T-cell (primary cell): ENCODE measurements at regions of chr7 and their contacts with region 1.

Region 1: DNA sequence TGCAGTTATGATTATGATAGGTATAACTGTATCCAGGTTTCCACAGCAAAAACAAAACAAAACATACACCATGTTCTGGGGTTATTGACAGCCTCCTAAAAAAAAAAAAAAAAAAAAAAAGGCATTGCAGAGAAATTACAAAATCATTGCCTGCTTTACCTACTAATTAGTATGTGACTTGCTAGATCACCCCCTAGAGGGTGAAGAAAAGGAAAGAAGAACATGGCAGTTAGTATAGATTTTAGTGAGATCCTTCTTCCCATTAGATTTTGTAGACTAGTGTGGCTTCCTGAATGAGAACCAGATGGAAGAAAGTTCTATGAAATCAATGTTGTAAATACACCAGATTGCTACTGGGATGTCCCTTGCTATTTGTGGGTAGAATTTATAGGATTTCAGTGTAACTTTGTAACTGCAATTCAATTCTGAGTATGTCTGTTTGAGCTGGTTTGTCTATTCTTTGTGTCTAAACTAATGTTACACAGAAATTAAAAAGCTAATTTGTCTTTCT is 24.0 kb upstream of the AGBL3 start:
- DNase-seq: no peak
- ATAC-seq: no peak
- H3K4me3 ChIP-seq: no peak overlapping the region
- H3K4me3 Mint-ChIP-seq: no peak overlapping the region
- H3K27ac ChIP-seq: no peak overlapping the region
- H3K27ac Mint-ChIP-seq: no peak overlapping the region
- H3K4me1 ChIP-seq: peaks cover 0 to under 1% of the 10 kb centered on the region in 2 experiments
- H3K4me1 Mint-ChIP-seq: peaks cover 2 to 4% (median 2%) of the 10 kb centered on the region in 3 donors
- H3K27me3 ChIP-seq: peaks cover 0 to 3% of the 10 kb centered on the region in 2 experiments
- H3K27me3 Mint-ChIP-seq: peaks cover 7 to 8% of the 10 kb centered on the region in 2 donors

Region 2: DNA sequence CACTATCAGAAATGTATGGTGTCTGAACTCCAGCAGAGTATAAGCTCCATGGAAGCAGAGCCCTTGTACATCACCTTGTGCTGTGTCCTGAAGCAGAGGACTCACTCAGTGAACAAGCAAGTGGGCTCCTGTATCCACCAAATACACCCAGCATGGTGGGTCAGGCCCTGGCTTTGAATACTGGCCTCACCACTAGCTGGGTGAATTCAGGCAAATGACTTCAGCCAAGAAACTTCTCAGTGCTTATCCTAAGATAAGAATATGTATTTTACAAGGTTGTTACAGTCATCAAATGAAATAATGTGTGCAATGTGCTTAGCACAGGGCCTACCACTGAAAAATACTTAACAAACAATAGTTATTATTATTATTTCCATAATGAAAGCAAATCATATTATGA is 120.3 kb before region 1 on chr7:
- CTCF ChIA-PET with region 1: no interaction called
- POLR2A ChIA-PET with region 1: interaction called in 1 of 2 experiments, 13 read pairs
- DNase-seq: no peak
- ATAC-seq: no peak
- H3K4me3 ChIP-seq: no peak overlapping the region
- H3K4me3 Mint-ChIP-seq: no peak overlapping the region
- H3K27ac ChIP-seq: no peak overlapping the region
- H3K27ac Mint-ChIP-seq: no peak overlapping the region
- H3K4me1 ChIP-seq: no peaks in the 10 kb centered on the region
- H3K4me1 Mint-ChIP-seq: peaks cover 0 to 1% (median 0%) of the 10 kb centered on the region in 3 donors
- H3K27me3 ChIP-seq: no peaks in the 10 kb centered on the region
- H3K27me3 Mint-ChIP-seq: no peaks in the 10 kb centered on the region

Region 3: DNA sequence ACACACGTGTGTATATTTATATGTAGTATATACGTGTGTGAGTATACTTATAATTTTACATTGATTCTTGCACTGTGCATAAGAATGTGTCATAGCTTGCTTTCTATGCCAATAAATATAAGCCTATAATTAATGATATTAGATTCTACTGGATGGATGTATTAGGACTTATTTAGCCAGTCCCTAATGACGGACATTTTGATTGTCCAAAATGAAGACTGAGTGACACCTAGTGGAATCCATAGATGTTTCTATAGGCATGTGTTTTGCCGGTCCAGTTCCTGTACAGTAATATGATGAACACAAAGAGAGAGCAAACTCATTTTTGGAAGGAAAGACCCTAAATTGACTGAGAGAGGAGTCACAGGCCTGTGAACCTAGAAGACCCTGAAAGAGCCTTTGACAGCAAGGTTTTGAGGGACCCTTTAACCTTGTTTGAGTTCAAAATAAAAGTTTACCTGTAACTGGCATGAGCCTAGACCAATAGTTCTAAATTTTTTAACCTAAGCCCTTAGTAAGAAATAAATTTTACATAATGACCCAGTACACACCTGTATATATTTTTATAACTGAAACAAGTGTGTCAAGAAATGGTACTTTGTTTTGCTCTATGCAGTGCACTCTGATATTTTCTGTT is 18.4 kb before region 1 on chr7:
- CTCF ChIA-PET with region 1: no interaction called
- POLR2A ChIA-PET with region 1: no interaction called
- DNase-seq: peak in 1 of 35 experiments; percentile 7
- ATAC-seq: no peak
- H3K4me3 ChIP-seq: no peak overlapping the region
- H3K4me3 Mint-ChIP-seq: no peak overlapping the region
- H3K27ac ChIP-seq: no peak overlapping the region
- H3K27ac Mint-ChIP-seq: no peak overlapping the region
- H3K4me1 ChIP-seq: peaks cover 0 to 9% of the 10 kb centered on the region in 2 experiments
- H3K4me1 Mint-ChIP-seq: peaks cover 16 to 25% (median 16%) of the 10 kb centered on the region in 3 donors
- H3K27me3 ChIP-seq: no peaks in the 10 kb centered on the region
- H3K27me3 Mint-ChIP-seq: no peaks in the 10 kb centered on the region